ENCODE measurements at regions of chr7 and their contacts with region 1.

Region 1: GRCh38 chr7:30276203-30276900 is 8.0 kb upstream of the ZNRF2 start:
- DNase-seq: no peak
- ATAC-seq: peak; percentile 93
- H3K4me3 ChIP-seq: no peak overlapping the region
- H3K27ac ChIP-seq: no peak overlapping the region
- H3K4me1 ChIP-seq: peaks cover 9% of the 10 kb centered on the region; the same call in 1 of the 2 replicates
- H3K27me3 ChIP-seq: no peaks in the 10 kb centered on the region
- CTCF ChIP-seq: peak; percentile 83 to 91 (median 84)
- EP300 ChIP-seq: no peak
- POLR2A ChIP-seq: no peak
- RAD21 ChIP-seq: peak; percentile 93

Region 2: DNA sequence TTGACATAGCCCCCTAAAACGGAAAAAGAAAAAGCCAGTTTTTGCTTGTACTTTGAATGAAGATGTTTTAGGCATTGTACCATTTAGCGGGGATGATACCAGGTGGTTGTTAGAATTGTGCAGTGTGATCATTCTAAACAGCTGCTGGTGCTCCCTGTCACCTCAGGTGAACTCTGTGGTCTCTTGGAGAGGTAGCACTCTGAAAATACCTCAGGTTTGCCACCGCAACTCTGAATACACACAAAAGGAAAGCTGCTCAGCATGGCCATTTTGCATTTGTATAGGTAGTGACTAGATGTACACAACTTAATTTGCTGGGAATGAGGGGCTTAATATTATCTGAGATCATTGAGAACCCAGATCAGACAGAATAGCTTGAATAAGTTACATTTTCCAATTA is 195.5 kb before region 1 on chr7:
- CTCF ChIA-PET with region 1: interaction called, 3 read pairs
- POLR2A ChIA-PET with region 1: no interaction called
- RAD21 ChIA-PET with region 1: no interaction called
- SMC1A ChIA-PET with region 1: no interaction called
- in situ Hi-C with region 1: no loop called
- intact Hi-C with region 1: loop called (anchors 5 kb)
- DNase-seq: no peak
- ATAC-seq: no peak
- H3K4me3 ChIP-seq: no peak overlapping the region
- H3K27ac ChIP-seq: no peak overlapping the region
- H3K4me1 ChIP-seq: no peaks in the 10 kb centered on the region
- H3K27me3 ChIP-seq: no peaks in the 10 kb centered on the region
- CTCF ChIP-seq: no peak
- EP300 ChIP-seq: no peak
- POLR2A ChIP-seq: no peak
- RAD21 ChIP-seq: no peak

Region 3: DNA sequence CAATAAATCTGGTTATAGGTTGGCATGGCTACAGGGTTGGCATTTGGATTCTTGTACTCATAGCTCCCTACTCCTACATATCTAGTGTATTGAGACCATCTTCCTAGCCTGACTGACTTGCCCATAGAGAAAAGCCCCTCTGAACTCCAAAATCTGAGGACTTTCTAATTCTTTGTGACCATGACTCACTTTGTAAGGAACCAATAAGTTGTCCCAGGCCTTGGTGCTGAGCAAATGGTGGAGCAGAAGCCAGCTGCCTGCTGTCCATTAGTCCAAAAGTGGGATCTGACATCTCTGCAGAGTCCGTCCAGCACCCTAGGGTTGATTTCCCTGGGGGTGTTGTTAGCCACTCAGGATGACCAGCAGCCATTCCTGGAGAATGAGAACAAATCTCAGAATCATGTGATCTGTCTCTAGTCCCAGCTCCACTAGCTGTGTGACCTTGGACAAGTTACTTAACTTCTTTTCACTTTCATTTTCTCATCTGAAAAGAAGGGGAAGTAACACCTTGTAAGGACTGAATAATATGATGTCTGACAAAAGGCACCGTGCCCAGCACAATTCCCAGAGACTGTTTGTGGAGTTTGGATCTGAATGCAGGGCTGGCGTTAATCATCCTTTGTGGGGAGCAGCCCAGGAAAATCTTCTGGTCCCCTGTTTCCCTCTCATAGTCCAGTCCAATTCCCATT is 97.5 kb before region 1 on chr7:
- CTCF ChIA-PET with region 1: interaction called, 30 read pairs
- POLR2A ChIA-PET with region 1: interaction called, 4 read pairs
- RAD21 ChIA-PET with region 1: interaction called, 42 read pairs
- SMC1A ChIA-PET with region 1: interaction called, 23 read pairs
- in situ Hi-C with region 1: no loop called
- intact Hi-C with region 1: no loop called
- DNase-seq: peak; percentile 61
- ATAC-seq: peak; percentile 90
- H3K4me3 ChIP-seq: peak overlapping the region; percentile 45
- H3K27ac ChIP-seq: peak overlapping the region; percentile 87
- H3K4me1 ChIP-seq: peaks cover 25% of the 10 kb centered on the region
- H3K27me3 ChIP-seq: no peaks in the 10 kb centered on the region
- CTCF ChIP-seq: no peak
- EP300 ChIP-seq: no peak
- POLR2A ChIP-seq: no peak
- RAD21 ChIP-seq: no peak

Region 4: GRCh38 chr7:30263090-30263710 is 13.2 kb before region 1 on chr7:
- CTCF ChIA-PET with region 1: interaction called, 24 read pairs
- POLR2A ChIA-PET with region 1: interaction called, 3 read pairs
- RAD21 ChIA-PET with region 1: interaction called, 10 read pairs
- SMC1A ChIA-PET with region 1: interaction called, 41 read pairs
- in situ Hi-C with region 1: no loop called
- intact Hi-C with region 1: no loop called
- DNase-seq: no peak
- ATAC-seq: no peak
- H3K4me3 ChIP-seq: no peak overlapping the region
- H3K27ac ChIP-seq: no peak overlapping the region
- H3K4me1 ChIP-seq: no peaks in the 10 kb centered on the region
- H3K27me3 ChIP-seq: no peaks in the 10 kb centered on the region
- CTCF ChIP-seq: no peak
- EP300 ChIP-seq: no peak
- POLR2A ChIP-seq: no peak
- RAD21 ChIP-seq: no peak

Region 5: DNA sequence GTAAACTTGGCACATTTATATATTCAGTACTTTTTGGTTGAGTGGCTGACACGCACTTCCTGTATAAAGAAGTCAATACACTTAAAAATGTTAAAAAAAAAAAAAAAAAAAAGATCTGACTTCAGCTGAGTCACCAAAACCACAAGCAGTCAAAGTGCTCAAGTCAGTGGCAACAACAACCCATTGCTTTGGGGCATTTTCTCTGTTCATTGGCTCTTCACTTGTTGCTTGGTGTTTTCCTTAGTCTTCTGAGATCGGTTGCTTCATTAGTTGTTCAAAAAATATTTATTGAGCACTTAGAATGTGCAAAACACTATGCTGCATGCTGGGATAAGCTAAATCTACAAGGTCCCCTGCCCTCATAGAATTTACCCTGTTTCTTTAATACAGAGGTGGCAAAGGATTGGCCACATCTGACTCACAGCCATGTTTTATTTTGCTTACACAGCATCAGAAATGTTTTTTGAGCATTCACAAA is 71.8 kb after region 1 on chr7:
- CTCF ChIA-PET with region 1: interaction called, 138 read pairs
- POLR2A ChIA-PET with region 1: interaction called, 6 read pairs
- RAD21 ChIA-PET with region 1: interaction called, 108 read pairs
- SMC1A ChIA-PET with region 1: interaction called, 202 read pairs
- in situ Hi-C with region 1: no loop called
- intact Hi-C with region 1: no loop called
- DNase-seq: peak; percentile 85
- ATAC-seq: peak; percentile 92
- H3K4me3 ChIP-seq: peak overlapping the region; percentile 4; the same call in 1 of the 2 replicates
- H3K27ac ChIP-seq: peak overlapping the region; percentile 83
- H3K4me1 ChIP-seq: peaks cover 23% of the 10 kb centered on the region; the same call in 1 of the 2 replicates
- H3K27me3 ChIP-seq: no peaks in the 10 kb centered on the region
- CTCF ChIP-seq: no peak
- EP300 ChIP-seq: peak; percentile 56 to 72; a peak in 2 of 4 replicates
- POLR2A ChIP-seq: no peak
- RAD21 ChIP-seq: no peak

Region 6: GRCh38 chr7:30510124-30511075 is 234.0 kb after region 1 on chr7:
- CTCF ChIA-PET with region 1: interaction called, 25 read pairs
- POLR2A ChIA-PET with region 1: no interaction called
- RAD21 ChIA-PET with region 1: interaction called, 4 read pairs
- SMC1A ChIA-PET with region 1: interaction called, 21 read pairs
- in situ Hi-C with region 1: no loop called
- intact Hi-C with region 1: no loop called
- DNase-seq: no peak
- ATAC-seq: peak; percentile 85
- H3K4me3 ChIP-seq: no peak overlapping the region
- H3K27ac ChIP-seq: no peak overlapping the region
- H3K4me1 ChIP-seq: no peaks in the 10 kb centered on the region
- H3K27me3 ChIP-seq: no peaks in the 10 kb centered on the region
- CTCF ChIP-seq: peak; percentile 67 to 85 (median 82)
- EP300 ChIP-seq: no peak
- POLR2A ChIP-seq: no peak
- RAD21 ChIP-seq: peak; percentile 75

Region 7: GRCh38 chr7:30564243-30564892 is 288.0 kb after region 1 on chr7:
- CTCF ChIA-PET with region 1: interaction called, 115 read pairs
- POLR2A ChIA-PET with region 1: interaction called, 5 read pairs
- RAD21 ChIA-PET with region 1: interaction called, 78 read pairs
- SMC1A ChIA-PET with region 1: interaction called, 96 read pairs
- in situ Hi-C with region 1: no loop called
- intact Hi-C with region 1: loop called (anchors 1 kb)
- DNase-seq: peak; percentile 30
- ATAC-seq: peak; percentile 100
- H3K4me3 ChIP-seq: no peak overlapping the region
- H3K27ac ChIP-seq: no peak overlapping the region
- H3K4me1 ChIP-seq: no peaks in the 10 kb centered on the region
- H3K27me3 ChIP-seq: no peaks in the 10 kb centered on the region
- CTCF ChIP-seq: peak; percentile 77 to 92 (median 79)
- EP300 ChIP-seq: no peak
- POLR2A ChIP-seq: no peak
- RAD21 ChIP-seq: peak; percentile 92